CD4-positive, alpha-beta memory T cell (primary cell): ENCODE measurements at regions of chr4 and their contacts with region 1.

Region 1: GRCh38 chr4:112099701-112100297 is 45.5 kb upstream of the FAM241A start:
- DNase-seq: peak in 4 of 5 donors; percentile 36 to 49 (median 44)
- H3K4me3 ChIP-seq: no peak overlapping the region
- H3K4me3 Mint-ChIP-seq: no peak overlapping the region
- H3K27ac ChIP-seq: no peak overlapping the region
- H3K27ac Mint-ChIP-seq: peak overlapping the region in 1 of 7 donors; percentile 36
- H3K4me1 ChIP-seq: no peaks in the 10 kb centered on the region
- H3K4me1 Mint-ChIP-seq: no peaks in the 10 kb centered on the region
- H3K27me3 ChIP-seq: no peaks in the 10 kb centered on the region
- H3K27me3 Mint-ChIP-seq: peaks cover 3 to 6% of the 10 kb centered on the region in 2 donors

Region 2: GRCh38 chr4:112214390-112215264 is 114.8 kb after region 1 on chr4:
- CTCF ChIA-PET with region 1: interaction called, 13 read pairs
- POLR2A ChIA-PET with region 1: no interaction called
- intact Hi-C with region 1: no loop called
- DNase-seq: peak in 4 of 5 donors; percentile 17 to 24 (median 20)
- H3K4me3 ChIP-seq: no peak overlapping the region
- H3K4me3 Mint-ChIP-seq: no peak overlapping the region
- H3K27ac ChIP-seq: no peak overlapping the region
- H3K27ac Mint-ChIP-seq: peak overlapping the region in 2 of 7 donors; percentile 2 to 26
- H3K4me1 ChIP-seq: no peaks in the 10 kb centered on the region
- H3K4me1 Mint-ChIP-seq: peaks cover 0 to 5% (median 2%) of the 10 kb centered on the region in 4 donors
- H3K27me3 ChIP-seq: no peaks in the 10 kb centered on the region
- H3K27me3 Mint-ChIP-seq: no peaks in the 10 kb centered on the region

Region 3: DNA sequence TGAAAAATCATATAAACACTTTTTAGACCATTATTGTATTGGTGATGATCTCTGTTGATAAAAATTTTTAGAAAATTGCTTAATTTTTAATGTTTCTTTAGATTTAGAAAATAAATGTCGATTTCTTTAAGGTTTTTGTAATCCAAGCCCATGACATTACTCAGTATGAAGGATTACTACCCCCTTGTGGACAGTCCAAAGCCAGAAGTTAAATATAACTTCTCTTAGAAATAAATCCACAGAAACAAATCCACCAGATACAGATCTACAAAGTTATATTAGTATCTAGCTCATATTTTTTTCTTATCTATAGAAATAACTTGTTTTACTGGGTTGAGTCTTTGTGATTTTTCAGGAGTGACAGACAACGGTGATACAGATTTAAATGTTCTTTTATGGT is 167.0 kb after region 1 on chr4:
- CTCF ChIA-PET with region 1: interaction called, 12 read pairs
- POLR2A ChIA-PET with region 1: no interaction called
- intact Hi-C with region 1: no loop called
- DNase-seq: peak in 1 of 5 donors; percentile 8
- H3K4me3 ChIP-seq: no peak overlapping the region
- H3K4me3 Mint-ChIP-seq: no peak overlapping the region
- H3K27ac ChIP-seq: no peak overlapping the region
- H3K27ac Mint-ChIP-seq: no peak overlapping the region
- H3K4me1 ChIP-seq: no peaks in the 10 kb centered on the region
- H3K4me1 Mint-ChIP-seq: peaks cover 4 to 12% (median 7%) of the 10 kb centered on the region in 4 donors
- H3K27me3 ChIP-seq: no peaks in the 10 kb centered on the region
- H3K27me3 Mint-ChIP-seq: no peaks in the 10 kb centered on the region

Region 4: DNA sequence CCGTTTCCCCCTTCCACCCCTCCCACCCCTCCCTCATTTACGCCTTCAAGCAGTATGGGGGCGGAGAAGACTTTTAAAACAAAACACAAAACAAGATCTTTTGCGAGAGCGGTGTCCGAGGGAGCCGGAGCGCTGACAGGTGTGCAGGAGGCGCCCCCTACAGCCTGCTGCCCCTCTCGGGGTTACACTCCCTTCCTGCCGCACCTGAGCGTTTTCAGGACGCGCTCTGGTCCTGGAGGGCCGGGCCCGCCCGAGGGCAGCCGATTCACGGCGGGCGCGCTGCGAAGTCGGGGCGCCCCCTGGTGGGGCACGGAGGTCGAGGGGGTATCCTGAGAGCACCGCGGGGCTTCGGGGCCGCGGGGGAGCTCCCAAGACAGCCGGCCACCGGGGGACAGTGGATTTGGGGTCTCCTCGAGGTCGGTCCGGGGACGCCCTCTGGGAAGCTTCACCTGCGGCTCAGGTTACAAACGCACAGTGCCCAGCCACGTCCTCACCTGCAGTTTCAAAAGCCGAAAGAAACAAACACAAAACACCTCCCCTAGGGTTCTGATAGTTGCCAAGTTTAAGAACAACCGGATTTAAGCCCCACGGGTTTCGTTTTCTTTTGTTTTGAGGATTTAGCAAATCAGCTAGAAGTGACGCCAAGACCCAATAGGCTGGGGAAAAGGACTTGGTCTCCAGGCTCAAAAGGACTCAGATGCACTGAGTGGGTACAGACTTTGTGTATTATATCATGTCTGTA is 424.1 kb after region 1 on chr4:
- CTCF ChIA-PET with region 1: interaction called, 27 read pairs
- POLR2A ChIA-PET with region 1: no interaction called
- intact Hi-C with region 1: loop called (anchors 1 kb)
- DNase-seq: peak; percentile 66 to 74 (median 67)
- H3K4me3 ChIP-seq: peak overlapping the region; percentile 20 to 46
- H3K4me3 Mint-ChIP-seq: peak overlapping the region; percentile 81 to 94 (median 86)
- H3K27ac ChIP-seq: no peak overlapping the region
- H3K27ac Mint-ChIP-seq: peak overlapping the region in 1 of 7 donors; percentile 65
- H3K4me1 ChIP-seq: peaks cover 24% of the 10 kb centered on the region
- H3K4me1 Mint-ChIP-seq: peaks cover 9 to 51% (median 19%) of the 10 kb centered on the region in 4 donors
- H3K27me3 ChIP-seq: peaks cover 45% of the 10 kb centered on the region
- H3K27me3 Mint-ChIP-seq: peaks cover 44 to 46% of the 10 kb centered on the region in 2 donors

Region 5: GRCh38 chr4:112765317-112765975 is 665.6 kb after region 1 on chr4:
- CTCF ChIA-PET with region 1: interaction called, 5 read pairs
- POLR2A ChIA-PET with region 1: no interaction called
- intact Hi-C with region 1: loop called (anchors 2 kb)
- DNase-seq: no peak
- H3K4me3 ChIP-seq: no peak overlapping the region
- H3K4me3 Mint-ChIP-seq: no peak overlapping the region
- H3K27ac ChIP-seq: no peak overlapping the region
- H3K27ac Mint-ChIP-seq: no peak overlapping the region
- H3K4me1 ChIP-seq: no peaks in the 10 kb centered on the region
- H3K4me1 Mint-ChIP-seq: peaks cover 0 to 2% (median under 1%) of the 10 kb centered on the region in 4 donors
- H3K27me3 ChIP-seq: no peaks in the 10 kb centered on the region
- H3K27me3 Mint-ChIP-seq: peaks cover 0 to 1% of the 10 kb centered on the region in 2 donors